Endothelial cell of umbilical vein (primary cell): ENCODE measurements at regions of chr2 and their contacts with region 1.

Region 1: GRCh38 chr2:135797497-135798274 is 39.3 kb downstream of the LCT start:
- DNase-seq: peak; percentile 71
- H3K4me3 ChIP-seq: no peak overlapping the region
- H3K27ac ChIP-seq: no peak overlapping the region
- H3K4me1 ChIP-seq: no peaks in the 10 kb centered on the region
- H3K27me3 ChIP-seq: no peaks in the 10 kb centered on the region
- CTCF ChIP-seq: peak; percentile 95 to 96
- POLR2A ChIP-seq: no peak

Region 2: GRCh38 chr2:134988994-134989605 is 808.6 kb before region 1 on chr2:
- CTCF ChIA-PET with region 1: interaction called, 68 read pairs
- POLR2A ChIA-PET with region 1: no interaction called
- dilution Hi-C with region 1: no loop called
- intact Hi-C with region 1: loop called (anchors 1 kb)
- DNase-seq: peak; percentile 34
- H3K4me3 ChIP-seq: no peak overlapping the region
- H3K27ac ChIP-seq: no peak overlapping the region
- H3K4me1 ChIP-seq: no peaks in the 10 kb centered on the region
- H3K27me3 ChIP-seq: peaks cover 10 to 31% of the 10 kb centered on the region in 2 experiments
- CTCF ChIP-seq: peak; percentile 15 to 33
- POLR2A ChIP-seq: no peak

Region 3: GRCh38 chr2:135741395-135742324 is 56.0 kb before region 1 on chr2 and contains the start of gene UBXN4:
- CTCF ChIA-PET with region 1: interaction called, 11 read pairs
- POLR2A ChIA-PET with region 1: no interaction called
- dilution Hi-C with region 1: no loop called
- intact Hi-C with region 1: loop called (anchors 1 kb)
- DNase-seq: peak; percentile 99
- H3K4me3 ChIP-seq: peak within 1 kb of the TSS; percentile 91 to 98 (median 97)
- H3K27ac ChIP-seq: peak within 1 kb of the TSS; percentile 84
- H3K4me1 ChIP-seq: peaks cover 29% of the 10 kb centered on the region
- H3K27me3 ChIP-seq: no peaks in the 10 kb centered on the region
- CTCF ChIP-seq: peak; percentile 63 to 70
- POLR2A ChIP-seq: peak; percentile 79
- total RNA-seq, gene UBXN4: 103 and 108 TPM in 2 replicates

Region 4: DNA sequence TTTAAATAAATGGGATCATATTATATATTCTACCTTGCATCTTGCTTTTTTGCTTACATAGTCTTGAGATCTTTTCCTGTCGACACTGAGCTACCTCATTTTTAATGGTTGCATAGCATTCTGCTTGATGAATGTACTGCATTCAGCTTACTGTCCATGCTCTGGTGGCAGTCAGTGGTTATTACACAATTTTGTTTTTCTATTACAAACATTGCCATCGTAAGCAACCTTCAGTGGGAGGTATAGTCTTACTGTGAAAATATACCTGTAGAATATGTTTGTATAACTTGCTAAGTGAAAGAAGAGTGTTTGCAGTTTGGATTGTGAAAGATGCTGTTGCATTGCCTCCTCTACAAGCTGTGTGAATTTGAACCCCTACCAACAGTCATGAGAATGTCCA is 12.7 kb before region 1 on chr2:
- CTCF ChIA-PET with region 1: interaction called, 78 read pairs
- POLR2A ChIA-PET with region 1: no interaction called
- dilution Hi-C with region 1: no loop called
- intact Hi-C with region 1: no loop called
- DNase-seq: no peak
- H3K4me3 ChIP-seq: no peak overlapping the region
- H3K27ac ChIP-seq: no peak overlapping the region
- H3K4me1 ChIP-seq: peaks cover 7% of the 10 kb centered on the region
- H3K27me3 ChIP-seq: no peaks in the 10 kb centered on the region
- CTCF ChIP-seq: no peak
- POLR2A ChIP-seq: no peak

Region 5: GRCh38 chr2:135904341-135904989 is 106.8 kb after region 1 on chr2:
- CTCF ChIA-PET with region 1: no interaction called
- POLR2A ChIA-PET with region 1: no interaction called
- dilution Hi-C with region 1: no loop called
- intact Hi-C with region 1: no loop called
- DNase-seq: no peak
- H3K4me3 ChIP-seq: no peak overlapping the region
- H3K27ac ChIP-seq: no peak overlapping the region
- H3K4me1 ChIP-seq: peaks cover 1% of the 10 kb centered on the region
- H3K27me3 ChIP-seq: no peaks in the 10 kb centered on the region
- CTCF ChIP-seq: no peak
- POLR2A ChIP-seq: no peak

Region 6: GRCh38 chr2:135942936-135943688 is 145.4 kb after region 1 on chr2:
- CTCF ChIA-PET with region 1: no interaction called
- POLR2A ChIA-PET with region 1: no interaction called
- dilution Hi-C with region 1: no loop called
- intact Hi-C with region 1: no loop called
- DNase-seq: no peak
- H3K4me3 ChIP-seq: no peak overlapping the region
- H3K27ac ChIP-seq: no peak overlapping the region
- H3K4me1 ChIP-seq: peaks cover under 1% of the 10 kb centered on the region
- H3K27me3 ChIP-seq: no peaks in the 10 kb centered on the region
- CTCF ChIP-seq: no peak
- POLR2A ChIP-seq: no peak

Region 7: DNA sequence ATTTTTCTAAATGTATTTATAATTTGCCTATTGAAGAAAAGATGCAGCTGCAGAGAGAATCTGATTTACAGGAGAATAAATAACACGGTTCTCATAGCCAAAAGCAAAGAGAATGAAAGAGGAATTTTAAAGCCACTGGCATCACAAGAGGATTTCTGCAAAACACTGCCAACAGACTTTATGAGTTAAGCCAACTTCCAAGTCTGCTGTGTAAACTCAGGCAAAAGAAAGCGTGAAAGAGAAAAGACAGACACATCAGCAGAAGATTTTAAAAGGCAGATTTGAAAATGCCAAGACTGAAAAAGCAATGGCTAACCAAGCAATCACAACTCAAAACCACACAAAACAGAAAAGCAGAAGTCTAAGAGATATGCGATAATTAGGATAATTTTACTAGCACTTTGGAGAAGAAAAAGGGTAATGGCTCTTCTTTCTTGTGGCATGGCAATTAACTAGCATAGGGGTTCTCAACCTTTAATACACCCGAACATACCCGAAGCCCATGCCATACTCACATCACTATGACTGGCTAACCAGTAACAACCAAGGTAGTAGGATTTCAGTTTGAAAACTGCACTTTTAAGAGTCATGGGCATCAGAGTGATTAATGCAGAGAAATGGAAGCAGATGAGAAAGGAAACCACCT is 182.9 kb after region 1 on chr2:
- CTCF ChIA-PET with region 1: no interaction called
- POLR2A ChIA-PET with region 1: no interaction called
- dilution Hi-C with region 1: no loop called
- intact Hi-C with region 1: no loop called
- DNase-seq: no peak
- H3K4me3 ChIP-seq: no peak overlapping the region
- H3K27ac ChIP-seq: no peak overlapping the region
- H3K4me1 ChIP-seq: peaks cover 13% of the 10 kb centered on the region
- H3K27me3 ChIP-seq: no peaks in the 10 kb centered on the region
- CTCF ChIP-seq: no peak
- POLR2A ChIP-seq: no peak

Region 8: DNA sequence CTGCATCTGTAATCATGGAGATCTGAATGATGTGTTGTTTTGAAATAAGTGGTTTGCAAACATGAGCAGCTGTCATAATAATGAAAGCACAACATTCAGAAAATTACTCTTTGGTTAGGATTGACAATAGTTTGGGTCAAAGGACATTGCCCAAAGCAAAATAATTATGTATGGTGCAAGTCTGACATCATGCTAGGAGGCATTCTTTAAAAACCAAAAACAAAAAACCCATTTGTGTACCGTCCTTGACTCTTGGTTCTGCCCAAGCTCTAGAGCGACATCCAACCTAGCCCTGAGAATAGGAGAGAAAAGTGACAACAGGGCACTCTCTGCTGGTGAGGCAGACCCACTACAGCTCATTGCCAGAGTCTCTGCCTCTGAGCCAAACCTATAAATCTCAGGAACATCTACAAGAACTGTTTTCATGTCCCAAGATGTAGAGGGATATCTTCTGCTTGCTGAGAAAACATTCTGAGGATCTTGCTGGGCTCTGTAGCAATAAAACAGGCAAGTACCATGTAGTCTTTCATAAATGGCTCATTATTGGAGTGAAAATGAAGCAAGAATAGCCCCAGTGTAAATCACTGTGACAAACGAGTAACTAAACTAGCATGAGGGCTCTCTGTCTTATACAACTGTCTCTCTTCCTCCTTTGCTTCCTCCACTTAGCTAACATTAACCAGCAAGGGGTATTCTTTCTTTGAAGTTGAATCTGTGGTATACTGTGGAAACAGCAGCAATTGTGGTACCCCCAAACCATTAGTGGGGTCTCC is 587.0 kb after region 1 on chr2:
- CTCF ChIA-PET with region 1: interaction called, 14 read pairs
- POLR2A ChIA-PET with region 1: no interaction called
- dilution Hi-C with region 1: no loop called
- intact Hi-C with region 1: loop called (anchors 2 kb)
- DNase-seq: peak; percentile 44
- H3K4me3 ChIP-seq: no peak overlapping the region
- H3K27ac ChIP-seq: no peak overlapping the region
- H3K4me1 ChIP-seq: no peaks in the 10 kb centered on the region
- H3K27me3 ChIP-seq: peaks cover 0 to 6% of the 10 kb centered on the region in 2 experiments
- CTCF ChIP-seq: peak; percentile 62 to 70
- POLR2A ChIP-seq: no peak

Region 9: DNA sequence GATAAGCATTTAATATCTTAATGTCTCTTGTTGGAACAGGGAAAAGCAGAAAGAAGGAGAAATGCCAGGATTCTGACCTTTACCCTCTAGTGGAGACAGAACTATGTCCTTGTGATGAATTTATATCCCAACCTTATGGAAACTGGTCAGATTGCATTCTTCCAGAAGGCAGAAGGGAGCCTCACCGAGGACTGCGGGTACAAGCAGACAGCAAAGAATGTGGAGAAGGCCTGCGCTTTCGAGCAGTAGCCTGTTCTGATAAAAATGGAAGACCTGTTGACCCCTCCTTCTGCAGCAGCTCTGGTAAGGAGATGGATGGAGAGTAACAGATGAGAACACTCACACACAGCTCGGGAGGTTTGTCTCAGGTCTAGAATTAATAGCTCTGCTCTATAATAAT is 1613.9 kb after region 1 on chr2:
- CTCF ChIA-PET with region 1: no interaction called
- POLR2A ChIA-PET with region 1: no interaction called
- dilution Hi-C with region 1: no loop called
- intact Hi-C with region 1: no loop called
- DNase-seq: no peak
- H3K4me3 ChIP-seq: no peak overlapping the region
- H3K27ac ChIP-seq: no peak overlapping the region
- H3K4me1 ChIP-seq: no peaks in the 10 kb centered on the region
- H3K27me3 ChIP-seq: no peaks in the 10 kb centered on the region
- CTCF ChIP-seq: no peak
- POLR2A ChIP-seq: no peak